Activated B cell treated with CpG ODN at 0.5 μM for 24 hours (primary cell): ENCODE measurements at regions of chr4 and their contacts with region 1.

Region 1: GRCh38 chr4:167183036-167183435 is 51.3 kb downstream of the SPOCK3 start:
- DNase-seq: no peak
- ATAC-seq: no peak
- H3K4me3 Mint-ChIP-seq: no peak overlapping the region
- H3K27ac Mint-ChIP-seq: no peak overlapping the region
- H3K4me1 Mint-ChIP-seq: no peaks in the 10 kb centered on the region
- H3K27me3 Mint-ChIP-seq: no peaks in the 10 kb centered on the region
- CTCF ChIP-seq: no peak

Region 2: DNA sequence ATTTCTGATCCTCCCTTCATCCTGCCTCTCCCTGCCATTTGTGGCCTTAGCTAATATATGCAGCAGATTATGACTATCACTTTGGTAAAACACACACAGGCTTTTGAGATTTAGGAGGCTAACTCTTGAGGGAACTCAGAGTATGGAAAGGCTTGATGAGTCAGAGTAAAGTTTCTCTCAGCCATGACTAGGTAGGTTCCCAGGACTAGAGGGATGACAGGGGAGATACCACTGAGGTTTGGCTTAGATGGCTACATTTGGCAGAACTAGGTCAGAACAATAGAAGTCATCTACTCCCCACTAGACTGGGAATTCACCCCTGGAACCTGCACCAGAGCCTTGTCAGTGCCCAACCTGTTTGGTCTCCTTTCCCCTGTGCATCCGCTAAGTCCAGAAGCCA is 724.3 kb before region 1 on chr4:
- CTCF ChIA-PET with region 1: no interaction called
- POLR2A ChIA-PET with region 1: no interaction called
- intact Hi-C with region 1: no loop called
- DNase-seq: no peak
- ATAC-seq: no peak
- H3K4me3 Mint-ChIP-seq: no peak overlapping the region
- H3K27ac Mint-ChIP-seq: no peak overlapping the region
- H3K4me1 Mint-ChIP-seq: no peaks in the 10 kb centered on the region
- H3K27me3 Mint-ChIP-seq: no peaks in the 10 kb centered on the region
- CTCF ChIP-seq: no peak

Region 3: GRCh38 chr4:167196344-167197012 is 13.4 kb after region 1 on chr4:
- CTCF ChIA-PET with region 1: no interaction called
- POLR2A ChIA-PET with region 1: no interaction called
- intact Hi-C with region 1: loop called (anchors 1 kb)
- DNase-seq: no peak
- ATAC-seq: no peak
- H3K4me3 Mint-ChIP-seq: no peak overlapping the region
- H3K27ac Mint-ChIP-seq: no peak overlapping the region
- H3K4me1 Mint-ChIP-seq: no peaks in the 10 kb centered on the region
- H3K27me3 Mint-ChIP-seq: no peaks in the 10 kb centered on the region
- CTCF ChIP-seq: no peak

Region 4: DNA sequence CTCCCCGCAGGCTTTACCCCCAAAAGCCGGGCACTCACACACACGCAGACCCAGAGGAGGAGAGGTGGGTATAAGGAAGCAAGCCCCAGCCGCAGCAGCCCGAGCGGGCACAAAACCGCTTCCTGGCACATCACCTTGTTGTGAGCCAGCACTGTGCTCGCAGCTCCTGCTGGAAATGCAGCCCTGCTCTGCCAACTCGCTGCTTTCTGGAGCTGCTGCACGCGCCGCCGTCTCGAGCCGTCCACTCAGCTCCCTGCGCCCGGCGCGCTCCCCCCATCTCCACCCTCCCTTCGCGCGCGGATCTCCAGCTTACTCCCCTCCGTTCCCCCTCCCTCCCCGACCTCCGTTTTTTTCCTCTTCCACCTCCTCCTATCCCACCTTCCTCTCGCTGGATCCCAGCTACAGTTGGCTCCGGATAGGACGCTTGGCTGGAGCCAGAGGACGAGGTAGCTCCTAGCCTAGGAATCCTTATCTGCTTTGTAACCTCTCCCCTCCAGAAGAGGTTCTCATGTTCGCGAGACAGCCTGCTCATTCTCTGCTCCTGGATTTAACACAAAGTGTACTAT is 51.4 kb after region 1 on chr4 and contains the start of gene SPOCK3:
- CTCF ChIA-PET with region 1: no interaction called
- POLR2A ChIA-PET with region 1: no interaction called
- intact Hi-C with region 1: no loop called
- DNase-seq: no peak
- ATAC-seq: no peak
- H3K4me3 Mint-ChIP-seq: peak within 1 kb of the TSS; percentile 65
- H3K27ac Mint-ChIP-seq: no peak within 1 kb of the TSS
- H3K4me1 Mint-ChIP-seq: peaks cover 11% of the 10 kb centered on the region
- H3K27me3 Mint-ChIP-seq: peaks cover 25% of the 10 kb centered on the region
- CTCF ChIP-seq: no peak
- total RNA-seq, gene SPOCK3: not detected in 2 replicates